ENCODE measurements at regions of chr2 and their contacts with region 1.

Region 1: GRCh38 chr2:164061129-164061746 is 325.4 kb upstream of the FIGN start:
- H3K4me3 Mint-ChIP-seq: no peak overlapping the region
- H3K27ac Mint-ChIP-seq: no peak overlapping the region
- H3K4me1 Mint-ChIP-seq: no peaks in the 10 kb centered on the region
- H3K27me3 Mint-ChIP-seq: no peaks in the 10 kb centered on the region

Region 2: GRCh38 chr2:162890690-162891311 is 1170.4 kb before region 1 on chr2:
- intact Hi-C with region 1: loop called (anchors 5 kb)
- H3K4me3 Mint-ChIP-seq: no peak overlapping the region
- H3K27ac Mint-ChIP-seq: no peak overlapping the region
- H3K4me1 Mint-ChIP-seq: no peaks in the 10 kb centered on the region
- H3K27me3 Mint-ChIP-seq: no peaks in the 10 kb centered on the region

Region 3: DNA sequence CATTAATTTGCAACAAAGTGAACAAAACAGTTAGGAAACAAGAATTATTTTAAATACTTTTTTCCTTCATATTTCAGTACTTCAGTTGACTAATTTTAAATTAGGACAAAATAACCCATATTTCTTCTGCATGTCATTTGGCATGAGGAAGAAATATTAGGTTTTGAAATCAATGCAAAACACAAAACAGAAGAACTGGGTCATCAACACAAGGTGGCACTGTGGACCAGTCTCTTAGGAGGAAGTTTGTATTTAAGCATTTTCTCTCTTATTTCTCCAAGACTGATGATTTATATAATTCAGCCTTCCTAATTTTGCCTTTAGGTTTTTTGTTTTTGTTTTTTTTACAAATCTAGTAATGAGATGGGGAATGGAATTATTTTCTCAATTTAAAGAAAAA is 869.9 kb before region 1 on chr2:
- intact Hi-C with region 1: loop called (anchors 1 kb)
- H3K4me3 Mint-ChIP-seq: no peak overlapping the region
- H3K27ac Mint-ChIP-seq: no peak overlapping the region
- H3K4me1 Mint-ChIP-seq: no peaks in the 10 kb centered on the region
- H3K27me3 Mint-ChIP-seq: no peaks in the 10 kb centered on the region

Region 4: DNA sequence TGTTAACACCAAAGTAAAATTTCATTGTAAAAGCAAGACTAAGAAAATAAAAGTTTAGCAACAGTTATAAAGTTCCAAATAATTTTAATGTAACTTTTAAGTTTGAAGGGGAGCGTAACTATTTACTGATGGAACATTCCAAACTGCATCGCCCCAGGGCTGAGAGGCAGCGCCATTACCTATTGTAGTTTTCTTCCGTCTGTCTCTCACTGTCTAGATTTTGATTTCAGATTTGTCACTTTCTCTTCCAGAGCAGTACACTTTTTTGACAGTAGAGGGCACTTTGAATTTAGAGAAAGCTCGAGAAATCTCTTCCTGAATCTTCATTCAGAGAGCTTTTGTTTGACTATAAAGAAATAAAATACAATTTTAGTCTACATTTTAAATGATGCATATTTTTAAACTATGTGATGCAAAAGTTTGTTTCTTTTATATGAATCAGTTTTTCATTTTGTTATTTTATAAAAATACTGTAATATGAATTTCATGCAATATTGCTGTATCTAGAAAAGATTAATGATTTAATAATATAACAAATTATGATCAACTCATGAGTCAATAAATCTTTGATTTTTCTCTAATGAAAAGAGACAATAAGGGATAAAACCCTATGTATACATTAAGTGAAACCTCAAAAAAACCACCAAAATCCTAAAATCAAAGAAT is 715.2 kb before region 1 on chr2:
- intact Hi-C with region 1: loop called (anchors 5 kb)
- H3K4me3 Mint-ChIP-seq: no peak overlapping the region
- H3K27ac Mint-ChIP-seq: no peak overlapping the region
- H3K4me1 Mint-ChIP-seq: peaks cover 20% of the 10 kb centered on the region
- H3K27me3 Mint-ChIP-seq: no peaks in the 10 kb centered on the region

Region 5: DNA sequence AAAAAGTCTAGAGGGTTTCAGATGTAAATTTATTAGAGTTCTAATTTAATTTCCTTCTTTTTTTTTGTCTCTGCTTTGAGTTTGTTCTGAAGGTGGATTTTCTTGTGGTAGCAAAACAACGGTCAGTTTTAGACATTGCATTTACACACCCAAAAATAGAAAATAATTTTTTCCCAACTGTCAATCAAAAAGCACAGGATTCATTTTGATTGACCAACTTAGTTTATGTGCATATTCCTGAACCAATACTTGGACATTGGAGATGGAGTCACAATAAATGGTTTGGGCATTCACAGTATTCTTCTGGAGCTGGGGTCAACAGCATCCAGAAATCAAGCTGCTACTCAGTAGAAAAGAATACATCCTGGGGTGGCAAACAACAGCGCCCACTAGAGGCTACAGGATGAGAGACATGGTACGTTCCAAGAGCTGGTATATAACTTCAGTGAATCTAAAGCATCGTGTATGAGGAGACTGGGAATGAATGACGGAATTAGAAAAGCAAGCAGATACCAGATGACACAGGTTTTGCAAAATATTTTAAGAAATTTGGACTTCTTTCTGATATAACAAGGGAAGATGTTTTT is 182.6 kb before region 1 on chr2:
- intact Hi-C with region 1: no loop called
- H3K4me3 Mint-ChIP-seq: no peak overlapping the region
- H3K27ac Mint-ChIP-seq: no peak overlapping the region
- H3K4me1 Mint-ChIP-seq: no peaks in the 10 kb centered on the region
- H3K27me3 Mint-ChIP-seq: no peaks in the 10 kb centered on the region

Region 6: GRCh38 chr2:164084066-164084465 is 22.8 kb after region 1 on chr2:
- intact Hi-C with region 1: no loop called
- H3K4me3 Mint-ChIP-seq: no peak overlapping the region
- H3K27ac Mint-ChIP-seq: no peak overlapping the region
- H3K4me1 Mint-ChIP-seq: no peaks in the 10 kb centered on the region
- H3K27me3 Mint-ChIP-seq: no peaks in the 10 kb centered on the region

Measured in dendritic cell treated with granulocyte-macrophage colony-stimulating factor and Interleukin-4, amounts not matched to agents 40 ng/mL and 50 ng/mL, for 4 days (primary cell).